ENCODE measurements at regions of chr11 and their contacts with region 1.

Region 1: DNA sequence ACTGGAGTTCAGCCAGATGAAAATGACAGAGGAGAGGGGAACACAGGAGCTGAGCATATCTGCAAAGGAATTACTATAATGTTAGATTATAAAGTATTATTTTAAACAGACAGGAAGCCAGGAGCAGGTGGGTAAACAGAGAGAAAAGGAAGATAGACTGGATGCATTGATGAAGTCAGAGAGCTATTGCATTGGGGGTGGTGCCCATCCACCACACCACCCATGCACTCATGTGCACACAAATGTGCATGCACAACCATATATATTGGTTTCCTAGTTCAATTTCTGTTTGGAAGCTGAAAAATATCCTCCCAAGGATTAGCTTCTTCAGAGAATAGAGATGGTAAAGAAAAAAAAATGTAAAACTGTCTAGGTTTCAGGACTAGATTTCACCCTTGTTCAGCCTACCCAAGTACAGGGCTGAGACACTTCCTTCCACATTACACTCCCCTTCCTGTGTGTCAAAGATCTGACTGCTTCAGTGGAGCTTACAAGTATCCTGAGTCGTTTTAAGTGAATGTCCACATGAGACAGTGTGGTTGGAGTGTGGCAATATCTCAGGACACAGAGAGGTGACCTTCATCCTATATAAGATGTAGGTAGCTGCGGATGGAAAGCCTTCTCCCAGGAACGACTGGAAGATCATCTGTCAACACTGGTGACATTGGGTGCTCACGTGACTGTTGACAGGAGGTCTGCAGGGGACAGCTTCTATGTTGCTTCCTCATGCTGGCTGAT is 12.2 kb upstream of the SMPD1 start:
- DNase-seq: peak; percentile 34
- H3K4me3 Mint-ChIP-seq: peak overlapping the region; percentile 61
- H3K27ac Mint-ChIP-seq: peak overlapping the region; percentile 93
- H3K4me1 Mint-ChIP-seq: peaks cover 37% of the 10 kb centered on the region
- H3K27me3 Mint-ChIP-seq: peaks cover 4% of the 10 kb centered on the region

Region 2: GRCh38 chr11:6333112-6333511 is 45.0 kb before region 1 on chr11:
- CTCF ChIA-PET with region 1: no interaction called
- DNase-seq: no peak
- H3K4me3 Mint-ChIP-seq: no peak overlapping the region
- H3K27ac Mint-ChIP-seq: no peak overlapping the region
- H3K4me1 Mint-ChIP-seq: no peaks in the 10 kb centered on the region
- H3K27me3 Mint-ChIP-seq: peaks cover 31% of the 10 kb centered on the region

Region 3: GRCh38 chr11:6362873-6363678 is 15.0 kb before region 1 on chr11:
- CTCF ChIA-PET with region 1: interaction called, 64 read pairs
- DNase-seq: peak; percentile 82
- H3K4me3 Mint-ChIP-seq: no peak overlapping the region
- H3K27ac Mint-ChIP-seq: no peak overlapping the region
- H3K4me1 Mint-ChIP-seq: no peaks in the 10 kb centered on the region
- H3K27me3 Mint-ChIP-seq: peaks cover 8% of the 10 kb centered on the region

Region 4: DNA sequence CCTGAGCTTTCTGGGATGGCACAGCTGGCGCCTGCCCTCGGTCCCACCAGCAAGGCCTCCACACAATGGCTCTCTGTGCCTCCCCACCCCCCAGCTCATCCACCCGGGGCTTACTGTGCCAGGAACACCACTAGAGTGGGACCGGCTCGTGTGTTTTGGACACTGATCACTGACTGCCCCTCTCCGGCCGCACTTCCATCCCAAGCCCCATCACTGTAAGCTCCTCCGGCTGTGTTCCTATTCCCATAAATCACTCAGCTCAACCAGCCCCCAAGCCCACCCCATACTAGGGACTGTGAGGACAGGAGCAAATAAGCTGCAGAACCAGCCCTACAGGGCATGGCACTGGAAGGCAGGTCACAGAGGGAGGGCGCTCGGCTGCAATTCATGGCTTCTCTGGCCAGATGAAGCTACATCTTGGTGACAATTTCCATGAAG is 33.5 kb after region 1 on chr11:
- CTCF ChIA-PET with region 1: interaction called, 18 read pairs
- DNase-seq: no peak
- H3K4me3 Mint-ChIP-seq: no peak overlapping the region
- H3K27ac Mint-ChIP-seq: no peak overlapping the region
- H3K4me1 Mint-ChIP-seq: peaks cover 21% of the 10 kb centered on the region
- H3K27me3 Mint-ChIP-seq: no peaks in the 10 kb centered on the region

Region 5: DNA sequence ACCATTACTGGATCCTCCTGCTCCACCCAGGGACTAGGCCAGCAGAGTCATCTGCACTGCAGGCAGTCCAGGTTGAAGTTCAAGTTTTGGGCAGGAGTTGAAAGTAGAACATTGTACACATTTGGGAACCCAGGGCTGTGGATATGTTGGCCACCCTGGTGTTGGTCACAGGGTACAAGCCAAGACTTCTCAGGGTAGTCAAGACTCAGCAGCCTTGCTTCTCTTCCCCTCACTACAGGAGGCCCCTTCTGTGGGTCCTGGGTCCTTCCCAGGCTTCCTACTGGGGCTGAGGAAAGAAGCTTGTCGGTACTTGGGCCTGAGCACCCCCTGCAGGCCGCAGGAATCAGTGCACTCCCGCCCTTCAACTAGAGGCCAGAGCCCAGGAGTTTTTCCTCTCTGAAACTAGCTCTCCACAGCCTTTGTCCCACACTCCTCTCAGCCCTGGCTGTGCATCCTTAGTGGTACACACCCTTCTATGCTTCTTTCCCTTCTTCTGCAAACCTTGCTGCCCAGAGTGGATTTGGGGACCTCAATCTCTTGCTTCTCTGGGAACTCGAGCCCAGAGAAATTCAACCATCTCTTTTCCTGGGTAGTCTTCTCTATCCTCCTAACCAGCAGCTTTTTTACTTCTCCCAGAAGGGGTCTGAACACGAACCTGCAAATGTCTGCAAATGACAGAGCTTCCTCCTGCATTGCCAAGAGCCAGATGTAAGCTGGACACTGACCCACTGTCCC is 65.4 kb after region 1 on chr11:
- CTCF ChIA-PET with region 1: interaction called, 563 read pairs
- DNase-seq: peak; percentile 70
- H3K4me3 Mint-ChIP-seq: no peak overlapping the region
- H3K27ac Mint-ChIP-seq: no peak overlapping the region
- H3K4me1 Mint-ChIP-seq: no peaks in the 10 kb centered on the region
- H3K27me3 Mint-ChIP-seq: peaks cover 9% of the 10 kb centered on the region

Region 6: GRCh38 chr11:6497069-6497839 is 119.2 kb after region 1 on chr11 and contains the start of gene DNHD1:
- CTCF ChIA-PET with region 1: interaction called, 21 read pairs
- DNase-seq: no peak
- H3K4me3 Mint-ChIP-seq: no peak within 1 kb of the TSS
- H3K27ac Mint-ChIP-seq: no peak within 1 kb of the TSS
- H3K4me1 Mint-ChIP-seq: peaks cover 3% of the 10 kb centered on the region
- H3K27me3 Mint-ChIP-seq: no peaks in the 10 kb centered on the region

Region 7: GRCh38 chr11:6682936-6683861 is 305.1 kb after region 1 on chr11 and contains the start of gene MRPL17:
- CTCF ChIA-PET with region 1: interaction called, 20 read pairs
- DNase-seq: peak; percentile 100
- H3K4me3 Mint-ChIP-seq: peak within 1 kb of the TSS; percentile 98
- H3K27ac Mint-ChIP-seq: peak within 1 kb of the TSS; percentile 96
- H3K4me1 Mint-ChIP-seq: peaks cover 29% of the 10 kb centered on the region
- H3K27me3 Mint-ChIP-seq: no peaks in the 10 kb centered on the region

Region 8: DNA sequence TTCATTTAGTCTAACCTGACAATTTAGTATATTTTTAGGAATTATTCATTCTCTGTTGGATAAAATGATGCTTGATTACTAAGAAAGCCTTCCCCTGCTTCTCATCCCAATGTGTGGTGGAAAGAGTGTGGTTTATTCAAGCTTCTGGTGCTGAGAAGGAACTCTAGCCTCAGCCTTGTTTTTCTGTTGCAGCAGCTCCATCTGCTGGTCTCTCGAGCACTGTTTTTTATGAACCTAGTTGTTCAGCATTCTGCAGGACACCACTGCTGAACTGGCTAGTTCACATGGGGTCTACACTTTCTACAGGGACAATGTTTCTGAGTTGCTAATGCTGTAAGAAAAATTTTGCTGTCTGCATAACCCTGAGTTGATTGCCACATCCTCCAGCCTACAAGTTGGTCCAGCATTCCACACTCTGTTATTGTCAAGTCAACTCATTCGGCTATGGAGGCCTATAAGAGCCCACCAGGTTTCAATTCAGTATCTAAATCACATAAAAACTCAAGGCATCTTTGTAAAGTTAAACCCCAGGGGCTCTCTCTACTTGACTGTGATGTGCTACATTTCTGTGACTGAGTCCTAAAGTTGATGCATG is 379.4 kb after region 1 on chr11:
- CTCF ChIA-PET with region 1: interaction called, 11 read pairs
- DNase-seq: peak; percentile 78
- H3K4me3 Mint-ChIP-seq: no peak overlapping the region
- H3K27ac Mint-ChIP-seq: no peak overlapping the region
- H3K4me1 Mint-ChIP-seq: peaks cover 2% of the 10 kb centered on the region
- H3K27me3 Mint-ChIP-seq: no peaks in the 10 kb centered on the region

Measured in activated naive CD4-positive, alpha-beta T cell treated with anti-CD3 and anti-CD28 coated beads, Interleukin-2, amount 10 ng/mL, durations not matched to agents 7 days and 5 days (primary cell).